H1 (cell line): ENCODE measurements at regions of chr15 and their contacts with region 1.

Region 1: DNA sequence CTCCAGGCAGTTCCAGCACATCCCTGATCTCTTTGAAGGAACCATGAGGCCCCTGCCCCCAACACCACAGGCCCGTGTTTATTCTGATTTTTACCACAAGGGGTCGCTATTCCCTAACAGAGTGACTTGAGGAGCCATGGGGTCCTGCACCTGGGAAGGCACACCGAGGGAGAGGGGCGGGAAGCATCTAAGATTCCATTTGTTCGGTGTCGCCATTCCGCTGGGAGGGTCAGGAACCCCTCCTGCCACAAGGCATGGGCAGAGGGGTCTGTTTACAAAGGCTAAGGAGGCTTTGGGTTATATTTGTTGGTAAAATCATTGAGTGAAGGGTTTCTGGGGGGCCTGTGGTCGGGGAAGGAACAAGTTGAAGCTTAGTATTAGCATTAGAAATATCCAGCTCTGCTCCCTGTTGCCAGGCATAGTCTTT is 77.1 kb downstream of the WDR76 start:
- DNase-seq: peak; percentile 70 to 94
- H3K4me3 ChIP-seq: no peak overlapping the region; a peak in 1 of 8 replicates
- H3K27ac ChIP-seq: no peak overlapping the region
- H3K4me1 ChIP-seq: peaks cover 0 to 5% (median 2%) of the 10 kb centered on the region in 4 experiments; a peak in 3 of 7 replicates
- H3K27me3 ChIP-seq: no peaks in the 10 kb centered on the region
- CTCF ChIP-seq: peak; percentile 69 to 94 (median 84)
- EP300 ChIP-seq: 0 out of 3 replicates have a peak, but pooled peaks of 1 of the 2 experiments have one; percentile 67
- POLR2A ChIP-seq: no peak
- RAD21 ChIP-seq: peak; percentile 99

Region 2: GRCh38 chr15:43800286-43801141 is 103.4 kb before region 1 on chr15 and contains the start of gene HYPK:
- CTCF ChIA-PET with region 1: no interaction called
- POLR2A ChIA-PET with region 1: no interaction called
- DNase-seq: peak; percentile 41 to 88
- H3K4me3 ChIP-seq: peak within 1 kb of the TSS; percentile 67 to 97 (median 88)
- H3K27ac ChIP-seq: peak within 1 kb of the TSS; percentile 28; the same call in 1 of the 2 replicates
- H3K4me1 ChIP-seq: peaks cover 7 to 16% (median 11%) of the 10 kb centered on the region in 4 experiments
- H3K27me3 ChIP-seq: no peaks in the 10 kb centered on the region
- CTCF ChIP-seq: no peak
- EP300 ChIP-seq: no peak
- POLR2A ChIP-seq: peak; percentile 2 to 82
- RAD21 ChIP-seq: no peak
- total RNA-seq, gene HYPK: 9.9 and 17.6 TPM in 2 replicates

Region 3: DNA sequence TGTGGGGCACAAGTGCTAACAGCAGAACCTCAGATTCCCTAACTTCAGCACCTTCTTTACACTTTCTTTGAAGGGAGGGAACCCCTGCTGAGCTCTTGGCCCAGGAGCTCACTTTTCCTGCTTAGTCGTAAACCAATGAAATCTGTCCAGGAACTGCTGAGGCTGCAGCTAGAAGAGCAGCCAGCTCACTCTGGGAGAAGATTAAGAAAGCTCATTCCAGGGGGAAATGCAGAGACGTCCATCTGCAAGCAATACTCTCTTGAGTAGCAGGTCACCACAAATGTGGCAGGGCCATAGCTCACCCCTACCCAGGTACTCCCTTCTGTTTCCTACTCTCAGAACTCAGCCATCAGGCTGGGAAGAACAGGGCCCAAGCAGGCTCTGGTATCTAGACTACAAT is 26.2 kb after region 1 on chr15:
- CTCF ChIA-PET with region 1: interaction called, 84 read pairs
- POLR2A ChIA-PET with region 1: interaction called, 4 read pairs
- DNase-seq: peak; percentile 23 to 51
- H3K4me3 ChIP-seq: no peak overlapping the region
- H3K27ac ChIP-seq: peak overlapping the region; percentile 32; the same call in 1 of the 2 replicates
- H3K4me1 ChIP-seq: peaks cover 26 to 51% (median 35%) of the 10 kb centered on the region in 4 experiments; a peak in 6 of 7 replicates
- H3K27me3 ChIP-seq: no peaks in the 10 kb centered on the region
- CTCF ChIP-seq: no peak
- EP300 ChIP-seq: no peak
- POLR2A ChIP-seq: no peak
- RAD21 ChIP-seq: no peak

Region 4: GRCh38 chr15:44029940-44030568 is 126.2 kb after region 1 on chr15:
- CTCF ChIA-PET with region 1: interaction called, 10 read pairs
- POLR2A ChIA-PET with region 1: no interaction called
- DNase-seq: no peak
- H3K4me3 ChIP-seq: no peak overlapping the region
- H3K27ac ChIP-seq: no peak overlapping the region
- H3K4me1 ChIP-seq: peaks cover 0 to 3% (median 0%) of the 10 kb centered on the region in 4 experiments; a peak in 1 of 7 replicates
- H3K27me3 ChIP-seq: no peaks in the 10 kb centered on the region
- CTCF ChIP-seq: no peak
- EP300 ChIP-seq: no peak
- POLR2A ChIP-seq: no peak
- RAD21 ChIP-seq: no peak

Region 5: DNA sequence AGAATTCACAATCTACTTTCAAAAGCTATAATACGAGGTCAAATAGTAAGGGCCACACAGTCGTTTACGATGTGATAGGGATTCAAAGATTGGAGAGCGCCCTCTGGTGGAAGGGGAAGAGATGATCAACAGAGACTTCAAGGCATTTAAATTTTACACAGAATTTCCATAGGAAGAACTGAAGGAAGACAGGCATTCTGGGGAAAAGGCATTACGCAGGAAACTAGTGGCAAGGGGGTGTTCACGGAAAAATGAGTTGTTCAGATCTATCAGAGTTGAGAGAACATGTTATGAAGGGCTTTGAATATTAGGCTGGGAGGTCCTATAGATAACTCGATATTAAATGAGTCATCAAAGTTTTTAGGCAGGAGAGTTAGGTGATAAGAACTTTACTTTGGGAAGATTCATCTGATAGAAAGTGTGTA is 162.5 kb after region 1 on chr15:
- CTCF ChIA-PET with region 1: interaction called, 86 read pairs
- POLR2A ChIA-PET with region 1: interaction called, 4 read pairs
- DNase-seq: peak; percentile 23 to 73
- H3K4me3 ChIP-seq: no peak overlapping the region
- H3K27ac ChIP-seq: no peak overlapping the region
- H3K4me1 ChIP-seq: no peaks in the 10 kb centered on the region
- H3K27me3 ChIP-seq: no peaks in the 10 kb centered on the region
- CTCF ChIP-seq: peak in 2 of 3 experiments; percentile 75 to 78; a peak in 3 of 4 replicates
- EP300 ChIP-seq: no peak
- POLR2A ChIP-seq: no peak
- RAD21 ChIP-seq: peak; percentile 91 to 93

Region 6: GRCh38 chr15:44219073-44219472 is 315.2 kb after region 1 on chr15:
- CTCF ChIA-PET with region 1: interaction called, 23 read pairs
- POLR2A ChIA-PET with region 1: interaction called, 3 read pairs
- DNase-seq: no peak
- H3K4me3 ChIP-seq: no peak overlapping the region
- H3K27ac ChIP-seq: no peak overlapping the region
- H3K4me1 ChIP-seq: peaks cover 0 to 5% (median 2%) of the 10 kb centered on the region in 4 experiments; a peak in 2 of 7 replicates
- H3K27me3 ChIP-seq: no peaks in the 10 kb centered on the region
- CTCF ChIP-seq: no peak
- EP300 ChIP-seq: no peak
- POLR2A ChIP-seq: no peak
- RAD21 ChIP-seq: no peak